Mammary epithelial cell (primary cell): ENCODE measurements at regions of chr9 and their contacts with region 1.

Region 1: DNA sequence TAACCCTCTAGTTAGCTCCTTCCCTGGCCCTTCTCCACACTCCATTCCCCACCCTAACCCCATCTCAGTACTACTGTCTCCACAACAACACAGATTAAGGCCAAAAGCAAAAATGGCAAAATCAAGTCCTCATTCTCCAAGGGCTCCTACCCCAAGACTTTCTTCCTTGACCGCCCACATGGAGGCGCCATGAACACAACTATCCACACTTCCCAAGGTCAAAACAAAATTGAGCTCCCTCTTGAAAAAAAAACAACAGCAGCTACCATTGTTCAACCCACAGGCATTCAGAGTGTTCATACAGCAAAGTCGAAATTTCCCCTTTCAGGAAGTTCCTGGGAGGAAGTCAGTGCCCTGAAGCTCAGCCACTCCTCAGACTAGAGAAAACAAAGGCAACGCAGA is 54.4 kb downstream of the GNAQ start:
- DNase-seq: peak; percentile 84
- H3K4me3 ChIP-seq: no peak overlapping the region
- H3K27ac ChIP-seq: peak overlapping the region; percentile 33
- H3K4me1 ChIP-seq: peaks cover 47% of the 10 kb centered on the region
- H3K27me3 ChIP-seq: no peaks in the 10 kb centered on the region
- CTCF ChIP-seq: peak; percentile 46 to 70

Region 2: DNA sequence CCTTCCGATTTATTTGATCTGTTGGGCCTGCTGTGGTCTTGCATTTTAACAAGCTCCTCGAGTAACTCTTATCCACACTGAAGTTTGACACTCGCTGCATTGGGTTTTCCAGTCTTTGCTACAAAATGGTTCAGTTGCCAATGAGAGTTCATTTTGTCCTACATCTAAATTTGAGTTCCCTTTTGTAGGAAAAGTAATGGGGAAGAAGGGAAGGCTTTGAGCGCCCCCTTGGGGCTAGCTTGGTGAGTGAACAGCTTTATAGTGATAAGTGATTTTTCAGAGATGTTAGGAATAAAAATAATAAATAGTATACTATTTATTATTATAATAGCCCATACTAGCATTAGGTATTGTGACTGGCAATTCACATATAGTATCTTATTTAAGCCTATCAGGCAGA is 144.3 kb after region 1 on chr9:
- CTCF ChIA-PET with region 1: interaction called, 13 read pairs
- dilution Hi-C with region 1: no loop called
- in situ Hi-C with region 1: no loop called
- intact Hi-C with region 1: loop called (anchors 1 kb)
- DNase-seq: peak; percentile 54
- H3K4me3 ChIP-seq: no peak overlapping the region
- H3K27ac ChIP-seq: no peak overlapping the region
- H3K4me1 ChIP-seq: peaks cover 28% of the 10 kb centered on the region
- H3K27me3 ChIP-seq: no peaks in the 10 kb centered on the region
- CTCF ChIP-seq: peak; percentile 80

Region 3: GRCh38 chr9:78213712-78214111 is 236.5 kb after region 1 on chr9:
- CTCF ChIA-PET with region 1: no interaction called
- dilution Hi-C with region 1: no loop called
- in situ Hi-C with region 1: no loop called
- intact Hi-C with region 1: loop called (anchors 1 kb)
- DNase-seq: peak; percentile 16
- H3K4me3 ChIP-seq: no peak overlapping the region
- H3K27ac ChIP-seq: no peak overlapping the region
- H3K4me1 ChIP-seq: no peaks in the 10 kb centered on the region
- H3K27me3 ChIP-seq: peaks cover 9% of the 10 kb centered on the region
- CTCF ChIP-seq: peak; percentile 15 to 39